HCT116 (cell line): ENCODE measurements at regions of chr3 and their contacts with region 1.

Region 1: DNA sequence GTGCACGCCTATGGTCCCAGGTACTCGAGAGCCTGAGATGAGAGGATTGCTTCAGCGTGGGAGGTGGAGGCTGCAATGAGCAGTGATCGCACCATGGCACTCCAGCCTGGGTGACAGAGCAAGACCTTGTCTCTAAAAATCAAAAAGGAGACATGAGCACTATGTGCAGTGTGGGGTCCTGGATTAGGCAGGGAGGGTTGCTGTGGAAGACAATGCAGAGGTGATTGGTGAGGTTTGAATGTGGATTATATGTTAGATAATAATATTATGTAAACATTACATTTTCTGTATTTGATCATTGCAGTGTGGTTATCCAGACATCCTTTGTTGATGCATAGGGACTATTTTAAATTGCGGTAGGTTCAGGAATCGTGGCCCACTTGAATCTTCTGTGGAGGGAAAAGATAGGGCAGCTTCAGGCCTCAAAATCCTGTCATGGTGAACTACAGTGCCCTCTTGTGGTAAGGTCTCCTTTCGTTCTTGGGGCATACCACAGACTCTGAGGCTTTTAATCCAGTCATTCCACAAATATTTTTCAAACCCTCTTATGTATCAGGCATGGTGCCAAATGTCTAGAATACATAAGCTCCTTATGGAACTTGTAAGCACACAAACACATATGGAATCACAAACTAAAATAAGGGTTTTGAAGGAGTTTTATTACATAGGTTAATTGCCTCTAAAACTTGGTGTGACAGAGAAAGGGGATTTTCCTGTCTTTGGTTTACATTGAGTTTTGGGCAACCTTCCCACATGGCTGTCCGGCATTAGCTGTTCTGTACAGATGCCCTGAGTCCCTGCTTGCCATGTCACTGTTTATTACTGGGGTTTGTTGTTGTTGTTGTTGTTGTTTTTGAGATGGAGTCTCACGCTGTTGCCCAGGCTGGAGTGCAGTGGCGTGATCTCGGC is 37.7 kb downstream of the GPD1L start:
- DNase-seq: peak; percentile 73
- ATAC-seq: peak; percentile 95
- H3K4me3 ChIP-seq: no peak overlapping the region
- H3K27ac ChIP-seq: no peak overlapping the region
- H3K4me1 ChIP-seq: no peaks in the 10 kb centered on the region
- H3K27me3 ChIP-seq: no peaks in the 10 kb centered on the region
- CTCF ChIP-seq: peak; percentile 70 to 84 (median 84)
- POLR2A ChIP-seq: no peak
- RAD21 ChIP-seq: peak; percentile 92

Region 2: GRCh38 chr3:30924763-30925162 is 1219.3 kb before region 1 on chr3:
- CTCF ChIA-PET with region 1: no interaction called
- POLR2A ChIA-PET with region 1: no interaction called
- RAD21 ChIA-PET with region 1: no interaction called
- intact Hi-C with region 1: loop called (anchors 5 kb)
- DNase-seq: no peak
- ATAC-seq: no peak
- H3K4me3 ChIP-seq: no peak overlapping the region
- H3K27ac ChIP-seq: no peak overlapping the region
- H3K4me1 ChIP-seq: no peaks in the 10 kb centered on the region
- H3K27me3 ChIP-seq: no peaks in the 10 kb centered on the region
- CTCF ChIP-seq: no peak
- POLR2A ChIP-seq: no peak
- RAD21 ChIP-seq: no peak

Region 3: DNA sequence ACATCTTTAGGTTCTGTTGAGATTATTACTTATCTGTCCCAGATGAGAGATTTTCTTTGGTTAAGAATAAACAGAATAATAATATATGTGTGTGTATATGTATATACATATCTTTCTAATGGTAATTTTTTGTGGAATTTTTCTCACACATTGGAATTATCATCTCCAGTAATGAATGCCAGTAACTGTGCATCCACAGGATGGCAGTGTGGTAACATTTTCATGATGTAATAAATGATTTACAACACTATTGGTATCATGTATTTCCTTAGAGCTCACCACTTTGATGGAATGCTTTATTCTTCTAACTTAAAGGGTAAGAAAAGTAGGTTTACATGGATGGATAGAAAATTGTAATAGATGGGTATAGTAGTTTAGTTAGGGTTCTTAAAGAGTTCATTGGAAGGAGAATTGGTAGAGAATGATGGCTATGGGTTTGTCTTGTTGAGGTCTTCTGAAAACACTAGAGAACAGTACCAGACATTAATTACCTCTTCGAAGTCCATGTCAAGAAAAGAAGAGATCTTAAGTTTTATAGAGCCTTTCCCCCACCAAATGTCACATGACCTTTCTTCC is 533.3 kb before region 1 on chr3:
- CTCF ChIA-PET with region 1: no interaction called
- POLR2A ChIA-PET with region 1: no interaction called
- RAD21 ChIA-PET with region 1: no interaction called
- intact Hi-C with region 1: loop called (anchors 2 kb)
- DNase-seq: peak; percentile 10
- ATAC-seq: peak; percentile 53; the same call in 1 of the 2 replicates
- H3K4me3 ChIP-seq: no peak overlapping the region
- H3K27ac ChIP-seq: no peak overlapping the region
- H3K4me1 ChIP-seq: 0 out of 4 replicates have a peak, but pooled peaks cover 0 to 5% of the 10 kb centered on the region in 2 experiments
- H3K27me3 ChIP-seq: no peaks in the 10 kb centered on the region
- CTCF ChIP-seq: peak; percentile 52 to 69 (median 53); a peak in 5 of 6 replicates
- POLR2A ChIP-seq: no peak
- RAD21 ChIP-seq: peak; percentile 66

Region 4: GRCh38 chr3:31724661-31725060 is 419.4 kb before region 1 on chr3:
- CTCF ChIA-PET with region 1: interaction called, 5 read pairs
- POLR2A ChIA-PET with region 1: no interaction called
- RAD21 ChIA-PET with region 1: no interaction called
- intact Hi-C with region 1: loop called (anchors 5 kb)
- DNase-seq: no peak
- ATAC-seq: peak; percentile 76
- H3K4me3 ChIP-seq: no peak overlapping the region
- H3K27ac ChIP-seq: no peak overlapping the region
- H3K4me1 ChIP-seq: peaks cover 2 to 8% of the 10 kb centered on the region in 2 experiments
- H3K27me3 ChIP-seq: no peaks in the 10 kb centered on the region
- CTCF ChIP-seq: peak; percentile 20 to 60 (median 53); a peak in 5 of 6 replicates
- POLR2A ChIP-seq: no peak
- RAD21 ChIP-seq: peak; percentile 46

Region 5: GRCh38 chr3:31862666-31863279 is 281.3 kb before region 1 on chr3:
- CTCF ChIA-PET with region 1: no interaction called
- POLR2A ChIA-PET with region 1: no interaction called
- RAD21 ChIA-PET with region 1: no interaction called
- intact Hi-C with region 1: loop called (anchors 5 kb)
- DNase-seq: no peak
- ATAC-seq: no peak
- H3K4me3 ChIP-seq: no peak overlapping the region
- H3K27ac ChIP-seq: no peak overlapping the region
- H3K4me1 ChIP-seq: no peaks in the 10 kb centered on the region
- H3K27me3 ChIP-seq: no peaks in the 10 kb centered on the region
- CTCF ChIP-seq: no peak
- POLR2A ChIP-seq: no peak
- RAD21 ChIP-seq: no peak

Region 6: DNA sequence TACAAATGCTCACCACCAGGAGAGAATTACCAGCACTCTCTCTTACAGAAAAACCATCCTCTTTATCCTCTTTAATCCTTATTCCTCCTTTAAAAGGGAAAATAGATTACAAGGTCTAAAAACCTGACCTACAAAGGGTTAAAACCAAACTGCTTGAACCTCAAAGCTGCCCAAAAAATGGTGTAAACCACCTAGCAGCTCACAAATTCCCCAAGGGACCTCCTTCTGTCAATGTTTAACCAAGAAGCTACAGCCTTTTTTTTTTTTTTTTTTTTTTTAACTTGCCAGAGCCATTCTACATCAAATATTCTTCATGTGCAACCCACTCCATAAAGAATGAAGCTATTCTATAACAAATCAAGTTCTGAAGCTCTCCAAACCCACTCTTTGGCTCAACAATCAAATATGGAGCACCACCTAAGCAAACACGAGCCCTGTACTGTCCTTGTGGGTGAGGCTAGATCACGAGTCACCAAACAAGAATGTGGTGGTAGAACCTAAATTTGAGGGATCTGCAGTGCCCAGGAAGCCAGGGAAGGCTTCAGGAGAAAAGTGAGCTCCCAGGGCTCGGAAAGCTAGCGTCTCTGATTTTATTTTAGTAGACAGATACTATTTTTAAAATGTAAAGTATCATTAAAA is 183.2 kb before region 1 on chr3:
- CTCF ChIA-PET with region 1: no interaction called
- POLR2A ChIA-PET with region 1: no interaction called
- RAD21 ChIA-PET with region 1: no interaction called
- intact Hi-C with region 1: no loop called
- DNase-seq: peak; percentile 40
- ATAC-seq: peak; percentile 94
- H3K4me3 ChIP-seq: no peak overlapping the region; a peak in 1 of 4 replicates
- H3K27ac ChIP-seq: no peak overlapping the region
- H3K4me1 ChIP-seq: peaks cover 14 to 19% of the 10 kb centered on the region in 2 experiments
- H3K27me3 ChIP-seq: no peaks in the 10 kb centered on the region
- CTCF ChIP-seq: no peak
- POLR2A ChIP-seq: no peak
- RAD21 ChIP-seq: no peak

Region 7: DNA sequence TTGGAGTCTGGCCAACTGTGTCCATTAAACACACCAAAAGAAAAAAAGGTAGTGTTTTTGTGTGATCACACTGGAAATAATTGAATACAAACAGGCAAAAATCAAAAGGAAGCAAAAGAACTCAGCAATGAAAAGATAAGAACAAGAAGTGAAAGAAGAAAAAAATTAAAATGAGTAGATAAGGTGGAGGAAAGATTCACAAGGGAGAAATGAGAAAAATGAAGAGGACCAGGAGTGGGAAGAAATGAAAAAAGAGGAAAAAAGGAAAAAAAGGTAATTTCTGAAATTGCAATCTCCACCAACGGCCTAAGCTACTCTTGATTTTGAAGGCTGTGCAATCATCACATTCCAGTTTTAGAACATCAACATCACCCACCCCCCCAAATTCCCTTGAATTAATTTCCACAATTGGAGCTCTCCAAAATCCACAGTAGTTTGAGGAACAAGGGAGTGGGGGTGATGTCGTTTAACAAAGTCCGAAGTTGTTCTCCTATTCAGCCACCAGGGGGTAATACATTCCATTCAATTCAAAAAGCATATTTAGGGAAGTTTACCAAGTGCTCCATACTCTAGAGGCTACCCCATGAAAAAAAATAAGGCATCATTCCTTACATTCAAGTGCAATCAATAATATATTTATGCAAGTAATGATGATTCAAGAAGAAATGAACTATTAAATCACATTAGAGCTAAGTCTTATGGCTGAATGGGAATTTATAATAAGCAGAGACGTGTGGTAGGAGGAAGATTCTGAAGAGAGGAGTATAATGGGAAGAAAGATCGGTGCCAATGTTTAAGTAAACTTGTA is 125.1 kb before region 1 on chr3:
- CTCF ChIA-PET with region 1: interaction called, 9 read pairs
- POLR2A ChIA-PET with region 1: no interaction called
- RAD21 ChIA-PET with region 1: no interaction called
- intact Hi-C with region 1: loop called (anchors 1 kb)
- DNase-seq: peak; percentile 54
- ATAC-seq: peak; percentile 94
- H3K4me3 ChIP-seq: no peak overlapping the region
- H3K27ac ChIP-seq: no peak overlapping the region
- H3K4me1 ChIP-seq: no peaks in the 10 kb centered on the region
- H3K27me3 ChIP-seq: no peaks in the 10 kb centered on the region
- CTCF ChIP-seq: peak; percentile 66 to 86 (median 79)
- POLR2A ChIP-seq: no peak
- RAD21 ChIP-seq: peak; percentile 86

Region 8: DNA sequence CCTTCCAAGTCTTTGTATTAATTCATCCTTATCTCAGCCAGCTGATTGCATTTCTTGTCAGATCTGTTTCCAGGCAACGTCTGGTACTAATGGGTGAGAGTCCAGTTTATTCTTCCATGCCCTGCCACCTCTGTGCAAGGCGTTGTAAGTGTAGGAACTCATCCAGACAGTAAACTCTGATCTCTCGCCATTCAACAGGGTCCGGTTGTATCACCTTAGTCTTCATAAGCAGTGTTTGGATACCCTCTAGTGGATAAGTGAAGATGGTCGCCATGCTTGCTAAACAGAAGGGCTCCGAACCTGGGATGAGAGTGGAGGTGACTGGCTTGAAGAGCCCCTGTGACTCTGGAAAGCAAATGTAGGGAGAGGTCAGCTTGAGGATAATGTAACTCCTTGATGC is 195.9 kb after region 1 on chr3:
- CTCF ChIA-PET with region 1: no interaction called
- POLR2A ChIA-PET with region 1: no interaction called
- RAD21 ChIA-PET with region 1: no interaction called
- intact Hi-C with region 1: loop called (anchors 1 kb)
- DNase-seq: peak; percentile 35
- ATAC-seq: peak; percentile 88
- H3K4me3 ChIP-seq: no peak overlapping the region
- H3K27ac ChIP-seq: no peak overlapping the region
- H3K4me1 ChIP-seq: no peaks in the 10 kb centered on the region
- H3K27me3 ChIP-seq: no peaks in the 10 kb centered on the region
- CTCF ChIP-seq: peak; percentile 51 to 72 (median 57)
- POLR2A ChIP-seq: no peak
- RAD21 ChIP-seq: peak; percentile 85